Panc1 (cell line): ENCODE measurements at regions of chr12 and their contacts with region 1.

Region 1: GRCh38 chr12:101885912-101886561 is 8.7 kb downstream of the DRAM1 start:
- DNase-seq: no peak
- ATAC-seq: no peak
- H3K4me3 ChIP-seq: no peak overlapping the region
- H3K27ac ChIP-seq: no peak overlapping the region
- H3K4me1 ChIP-seq: peaks cover 2% of the 10 kb centered on the region; the same call in 1 of the 2 replicates
- H3K27me3 ChIP-seq: no peaks in the 10 kb centered on the region
- CTCF ChIP-seq: no peak

Region 2: GRCh38 chr12:101857043-101857558 is 28.9 kb before region 1 on chr12:
- CTCF ChIA-PET with region 1: interaction called, 10 read pairs
- POLR2A ChIA-PET with region 1: no interaction called
- in situ Hi-C with region 1: no loop called
- intact Hi-C with region 1: no loop called
- DNase-seq: peak; percentile 43
- ATAC-seq: peak; percentile 58; the same call in 1 of the 2 replicates
- H3K4me3 ChIP-seq: no peak overlapping the region
- H3K27ac ChIP-seq: no peak overlapping the region
- H3K4me1 ChIP-seq: no peaks in the 10 kb centered on the region
- H3K27me3 ChIP-seq: no peaks in the 10 kb centered on the region
- CTCF ChIP-seq: no peak

Region 3: GRCh38 chr12:101909646-101910045 is 23.6 kb after region 1 on chr12:
- CTCF ChIA-PET with region 1: no interaction called
- POLR2A ChIA-PET with region 1: no interaction called
- in situ Hi-C with region 1: no loop called
- intact Hi-C with region 1: no loop called
- DNase-seq: no peak
- ATAC-seq: no peak
- H3K4me3 ChIP-seq: no peak overlapping the region
- H3K27ac ChIP-seq: no peak overlapping the region
- H3K4me1 ChIP-seq: no peaks in the 10 kb centered on the region
- H3K27me3 ChIP-seq: no peaks in the 10 kb centered on the region
- CTCF ChIP-seq: no peak